ENCODE measurements at regions of chr2 and their contacts with region 1.

Region 1: GRCh38 chr2:43524177-43524965 is 71.5 kb downstream of the THADA start:
- DNase-seq: peak in 2 of 4 experiments; percentile 38 to 46
- ATAC-seq: 0 out of 3 replicates have a peak, but pooled peaks have one; percentile 49
- H3K4me3 ChIP-seq: no peak overlapping the region
- H3K27ac ChIP-seq: no peak overlapping the region
- H3K4me1 ChIP-seq: no peaks in the 10 kb centered on the region
- H3K27me3 ChIP-seq: no peaks in the 10 kb centered on the region
- CTCF ChIP-seq: peak; percentile 12 to 41 (median 40); a peak in 4 of 6 replicates
- EP300 ChIP-seq: no peak
- POLR2A ChIP-seq: no peak
- RAD21 ChIP-seq: no peak

Region 2: DNA sequence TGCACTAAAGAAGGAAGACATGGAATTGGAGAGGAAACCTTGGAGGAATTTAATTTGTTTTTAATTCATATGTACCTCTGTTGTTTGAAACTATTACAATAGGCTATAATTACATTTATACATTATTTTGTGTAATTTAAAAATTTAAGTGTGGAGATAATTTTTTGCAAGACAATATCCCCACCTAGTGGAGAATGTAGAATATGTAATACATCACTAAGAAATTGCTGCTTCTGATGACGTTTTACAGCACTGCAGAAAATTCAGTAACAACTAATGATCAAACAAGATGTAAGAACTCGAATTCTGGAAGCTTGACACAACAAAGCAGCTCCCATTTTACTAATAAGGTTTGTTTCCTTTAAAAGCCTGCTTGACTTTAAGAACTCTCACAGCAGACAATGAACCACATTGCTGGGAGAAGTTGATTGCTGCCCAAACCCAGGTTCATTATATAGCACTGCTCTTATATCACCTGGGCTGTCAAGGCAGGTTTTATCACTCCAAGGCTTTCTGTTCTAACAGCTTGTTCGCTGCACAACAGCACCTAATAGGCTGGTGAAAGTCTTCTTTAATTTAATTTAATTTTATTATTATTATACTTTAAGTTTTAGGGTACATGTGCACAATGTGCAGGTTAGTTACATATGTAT is 18.0 kb after region 1 on chr2:
- CTCF ChIA-PET with region 1: no interaction called
- POLR2A ChIA-PET with region 1: interaction called, 19 read pairs
- in situ Hi-C with region 1: no loop called
- intact Hi-C with region 1: no loop called
- DNase-seq: peak; percentile 20 to 38 (median 32)
- ATAC-seq: peak; percentile 70
- H3K4me3 ChIP-seq: no peak overlapping the region
- H3K27ac ChIP-seq: no peak overlapping the region
- H3K4me1 ChIP-seq: peaks cover 0 to 4% of the 10 kb centered on the region in 2 experiments; a peak in 1 of 5 replicates
- H3K27me3 ChIP-seq: no peaks in the 10 kb centered on the region
- CTCF ChIP-seq: peak in 2 of 3 experiments; percentile 36 to 72; a peak in 4 of 6 replicates
- EP300 ChIP-seq: no peak
- POLR2A ChIP-seq: no peak
- RAD21 ChIP-seq: peak; percentile 61 to 74

Region 3: GRCh38 chr2:43773876-43774613 is 249.7 kb after region 1 on chr2 and contains the start of gene DYNC2LI1:
- CTCF ChIA-PET with region 1: no interaction called
- POLR2A ChIA-PET with region 1: no interaction called
- in situ Hi-C with region 1: no loop called
- intact Hi-C with region 1: no loop called
- DNase-seq: peak; percentile 86 to 94 (median 88)
- ATAC-seq: peak; percentile 99
- H3K4me3 ChIP-seq: peak within 1 kb of the TSS; percentile 61
- H3K27ac ChIP-seq: peak within 1 kb of the TSS; percentile 67
- H3K4me1 ChIP-seq: peaks cover 0 to 2% of the 10 kb centered on the region in 2 experiments; a peak in 2 of 5 replicates
- H3K27me3 ChIP-seq: no peaks in the 10 kb centered on the region
- CTCF ChIP-seq: no peak
- EP300 ChIP-seq: no peak
- POLR2A ChIP-seq: peak; percentile 79
- RAD21 ChIP-seq: no peak
- polyA plus RNA-seq, gene DYNC2LI1: 37.5 to 40.0 TPM

Measured in K562 (cell line).